ENCODE measurements at regions of chr7 and their contacts with region 1.

Region 1: DNA sequence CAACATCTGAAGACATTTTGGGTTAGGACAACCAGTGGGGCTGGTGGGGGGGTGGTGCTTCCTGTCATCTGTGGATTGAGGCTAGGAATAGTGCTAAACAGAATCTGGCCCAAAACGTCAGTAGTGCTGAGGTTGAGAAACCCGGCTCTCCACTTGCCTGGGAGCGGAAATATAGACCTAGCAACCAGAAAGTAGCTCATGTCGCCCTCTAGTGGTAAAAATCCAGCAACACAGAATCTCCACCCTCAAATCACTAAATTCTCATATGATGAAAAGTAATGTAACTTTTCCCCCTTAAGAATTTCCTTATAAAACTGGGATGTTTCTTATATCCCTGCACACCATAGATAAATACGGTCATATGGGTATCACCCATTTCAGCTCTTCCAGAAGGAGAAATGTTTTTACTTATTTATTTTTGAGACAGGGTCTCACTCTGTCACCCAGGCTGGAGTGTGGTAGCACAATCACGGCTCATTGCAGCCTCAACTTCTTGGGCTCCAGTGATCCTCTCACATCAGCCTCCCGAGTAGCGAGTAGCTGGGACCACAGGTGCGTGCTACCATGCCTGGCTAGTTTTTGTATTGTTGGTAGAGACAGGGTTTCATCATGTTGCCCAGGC is 34.4 kb downstream of the ZC3HAV1 start:
- DNase-seq: peak; percentile 73
- H3K4me3 Mint-ChIP-seq: no peak overlapping the region
- H3K27ac Mint-ChIP-seq: peak overlapping the region; percentile 75
- H3K4me1 Mint-ChIP-seq: peaks cover 52% of the 10 kb centered on the region
- H3K27me3 Mint-ChIP-seq: no peaks in the 10 kb centered on the region

Region 2: DNA sequence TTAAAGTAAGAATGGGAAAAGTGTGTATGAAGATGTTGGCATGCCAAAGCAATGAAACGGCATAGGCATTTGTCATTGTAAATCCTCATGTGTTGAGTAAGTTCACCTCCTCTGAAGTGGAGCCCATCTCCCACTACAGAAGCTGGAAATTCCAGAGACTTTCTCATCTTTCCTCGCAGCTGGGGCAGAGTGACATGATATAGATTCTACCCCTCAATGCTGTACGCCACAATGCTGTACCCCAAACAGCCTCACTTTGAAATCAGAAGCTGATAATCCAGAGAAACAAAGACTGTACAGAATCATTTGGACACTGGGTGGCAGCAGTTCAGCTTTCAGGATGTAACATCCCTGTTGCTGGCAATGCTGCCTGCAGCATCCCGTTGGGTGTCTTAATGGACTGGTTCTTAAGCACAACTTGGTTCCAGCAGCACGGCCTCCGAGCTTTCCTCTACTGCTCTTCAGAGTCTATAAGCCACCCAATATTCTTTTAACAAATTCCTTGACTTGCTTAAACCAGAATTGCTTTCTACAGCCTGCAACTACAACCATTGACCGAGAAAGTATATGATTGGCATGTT is 58.1 kb before region 1 on chr7:
- CTCF ChIA-PET with region 1: interaction called, 40 read pairs
- POLR2A ChIA-PET with region 1: no interaction called
- intact Hi-C with region 1: loop called (anchors 1 kb)
- DNase-seq: peak; percentile 67
- H3K4me3 Mint-ChIP-seq: no peak overlapping the region
- H3K27ac Mint-ChIP-seq: no peak overlapping the region
- H3K4me1 Mint-ChIP-seq: no peaks in the 10 kb centered on the region
- H3K27me3 Mint-ChIP-seq: peaks cover 2% of the 10 kb centered on the region

Region 3: GRCh38 chr7:139043823-139044812 is 31.0 kb before region 1 on chr7:
- CTCF ChIA-PET with region 1: interaction called, 12 read pairs
- POLR2A ChIA-PET with region 1: no interaction called
- intact Hi-C with region 1: loop called (anchors 1 kb)
- DNase-seq: peak; percentile 84
- H3K4me3 Mint-ChIP-seq: no peak overlapping the region
- H3K27ac Mint-ChIP-seq: peak overlapping the region; percentile 62
- H3K4me1 Mint-ChIP-seq: peaks cover 63% of the 10 kb centered on the region
- H3K27me3 Mint-ChIP-seq: no peaks in the 10 kb centered on the region

Region 4: GRCh38 chr7:139086454-139086853 is 11.3 kb after region 1 on chr7:
- CTCF ChIA-PET with region 1: interaction called, 38 read pairs
- POLR2A ChIA-PET with region 1: no interaction called
- intact Hi-C with region 1: loop called (anchors 1 kb)
- DNase-seq: no peak
- H3K4me3 Mint-ChIP-seq: no peak overlapping the region
- H3K27ac Mint-ChIP-seq: peak overlapping the region; percentile 79
- H3K4me1 Mint-ChIP-seq: peaks cover 79% of the 10 kb centered on the region
- H3K27me3 Mint-ChIP-seq: no peaks in the 10 kb centered on the region